IMR-90 (cell line): ENCODE measurements at regions of chr13 and their contacts with region 1.

Region 1: GRCh38 chr13:84934911-84935310 is 864.3 kb downstream of the SLITRK6 start:
- DNase-seq: no peak
- ATAC-seq: no peak
- H3K4me3 ChIP-seq: peak overlapping the region; percentile 40
- H3K27ac ChIP-seq: no peak overlapping the region
- H3K4me1 ChIP-seq: no peaks in the 10 kb centered on the region
- H3K27me3 ChIP-seq: no peaks in the 10 kb centered on the region
- CTCF ChIP-seq: no peak
- POLR2A ChIP-seq: no peak
- RAD21 ChIP-seq: no peak

Region 2: DNA sequence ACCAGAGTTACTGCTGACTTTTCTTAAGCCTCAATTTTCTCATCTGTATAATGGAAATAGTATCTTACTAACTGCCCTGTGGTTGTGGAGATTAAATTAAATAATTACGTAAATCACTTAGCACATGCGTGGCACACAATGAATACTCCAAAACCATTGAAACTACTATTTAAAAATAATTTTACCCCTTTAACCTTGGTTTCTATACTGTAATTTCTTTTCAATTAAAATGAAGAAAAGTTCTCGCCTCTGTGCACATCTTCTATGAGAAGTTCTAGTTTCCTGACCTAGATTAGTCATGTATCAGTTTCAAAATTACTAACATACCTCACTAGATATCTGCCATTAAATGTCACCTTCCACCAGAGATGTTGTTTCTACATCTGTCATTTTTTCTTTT is 1058.4 kb before region 1 on chr13:
- CTCF ChIA-PET with region 1: no interaction called
- POLR2A ChIA-PET with region 1: interaction called, 16 read pairs
- dilution Hi-C with region 1: no loop called
- in situ Hi-C with region 1: no loop called
- intact Hi-C with region 1: no loop called
- DNase-seq: no peak
- ATAC-seq: no peak
- H3K4me3 ChIP-seq: no peak overlapping the region
- H3K27ac ChIP-seq: no peak overlapping the region
- H3K4me1 ChIP-seq: no peaks in the 10 kb centered on the region
- H3K27me3 ChIP-seq: peaks cover 17% of the 10 kb centered on the region
- CTCF ChIP-seq: no peak
- POLR2A ChIP-seq: no peak
- RAD21 ChIP-seq: no peak

Region 3: DNA sequence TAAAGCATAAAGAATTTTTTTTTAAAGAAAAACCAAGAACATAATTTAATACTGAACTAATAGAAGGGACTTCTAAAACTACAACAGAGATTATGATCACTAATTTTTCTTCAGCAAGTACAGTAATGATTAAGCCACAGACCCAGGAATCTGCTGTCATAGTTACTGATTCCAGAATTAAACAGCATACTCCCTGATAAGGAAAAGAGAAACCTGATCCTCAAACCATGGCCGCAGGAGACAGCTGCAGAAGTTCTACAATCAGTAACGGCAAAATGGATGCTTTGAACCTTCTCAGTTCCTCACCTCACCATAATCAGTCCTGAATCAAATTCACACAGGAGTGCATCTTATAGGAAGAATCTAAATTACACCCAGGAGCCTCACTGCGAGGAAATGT is 113.7 kb before region 1 on chr13:
- CTCF ChIA-PET with region 1: no interaction called
- POLR2A ChIA-PET with region 1: no interaction called
- dilution Hi-C with region 1: no loop called
- in situ Hi-C with region 1: no loop called
- intact Hi-C with region 1: no loop called
- DNase-seq: no peak
- ATAC-seq: no peak
- H3K4me3 ChIP-seq: no peak overlapping the region
- H3K27ac ChIP-seq: no peak overlapping the region
- H3K4me1 ChIP-seq: no peaks in the 10 kb centered on the region
- H3K27me3 ChIP-seq: no peaks in the 10 kb centered on the region
- CTCF ChIP-seq: no peak
- POLR2A ChIP-seq: no peak
- RAD21 ChIP-seq: no peak